ENCODE measurements at regions of chr10 and their contacts with region 1.

Region 1: GRCh38 chr10:21184216-21184615 is 287.1 kb upstream of the NEBL start:
- DNase-seq: peak; percentile 73
- H3K4me3 Mint-ChIP-seq: no peak overlapping the region
- H3K27ac Mint-ChIP-seq: peak overlapping the region; percentile 95
- H3K4me1 Mint-ChIP-seq: peaks cover 24% of the 10 kb centered on the region
- H3K27me3 Mint-ChIP-seq: no peaks in the 10 kb centered on the region
- CTCF ChIP-seq: no peak

Region 2: GRCh38 chr10:21194464-21194993 is 10.3 kb after region 1 on chr10:
- CTCF ChIA-PET with region 1: no interaction called
- POLR2A ChIA-PET with region 1: interaction called, 23 read pairs
- intact Hi-C with region 1: no loop called
- DNase-seq: peak; percentile 86
- H3K4me3 Mint-ChIP-seq: peak overlapping the region; percentile 13
- H3K27ac Mint-ChIP-seq: peak overlapping the region; percentile 43
- H3K4me1 Mint-ChIP-seq: peaks cover 29% of the 10 kb centered on the region
- H3K27me3 Mint-ChIP-seq: no peaks in the 10 kb centered on the region
- CTCF ChIP-seq: no peak

Region 3: GRCh38 chr10:21208666-21209316 is 24.6 kb after region 1 on chr10:
- CTCF ChIA-PET with region 1: no interaction called
- POLR2A ChIA-PET with region 1: no interaction called
- intact Hi-C with region 1: no loop called
- DNase-seq: no peak
- H3K4me3 Mint-ChIP-seq: no peak overlapping the region
- H3K27ac Mint-ChIP-seq: no peak overlapping the region
- H3K4me1 Mint-ChIP-seq: no peaks in the 10 kb centered on the region
- H3K27me3 Mint-ChIP-seq: no peaks in the 10 kb centered on the region
- CTCF ChIP-seq: no peak

Measured in MCF 10A (cell line).